GM10248 (cell line): ENCODE measurements at regions of chr3 and their contacts with region 1.

Region 1: DNA sequence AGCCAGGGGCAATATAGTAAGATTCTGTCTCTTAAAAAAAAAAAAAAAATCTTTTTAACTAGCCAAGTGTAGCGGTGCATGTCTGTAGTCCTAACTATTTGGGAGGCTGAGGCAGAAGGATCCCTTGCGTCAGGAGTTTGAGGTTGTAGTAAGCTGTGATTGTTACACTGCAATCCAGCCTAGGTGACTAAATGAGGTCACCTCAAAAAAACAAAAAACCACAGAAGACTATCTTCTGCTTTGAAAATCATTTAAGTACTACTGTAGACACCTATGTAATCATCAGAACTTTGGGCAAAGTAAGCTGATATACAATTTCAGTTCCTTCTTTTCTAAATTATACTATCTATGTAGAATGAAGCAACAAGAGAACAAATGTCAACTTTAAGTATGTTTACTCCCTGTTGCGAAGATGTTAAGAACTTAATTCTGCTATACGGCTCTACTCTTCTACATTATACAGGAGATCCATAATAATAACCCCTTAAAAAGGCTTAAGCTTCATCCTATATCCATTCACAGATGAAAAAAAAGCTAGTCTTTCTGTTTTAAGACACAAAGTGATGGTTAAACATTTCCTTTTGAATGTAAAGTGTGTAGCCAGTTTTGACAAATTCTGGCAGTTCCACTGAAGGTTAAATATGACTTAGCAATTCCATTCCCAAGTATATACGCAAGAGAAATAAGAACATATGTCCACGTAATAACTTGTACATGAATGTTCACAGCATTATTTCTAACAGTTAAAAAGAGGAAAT is 15.2 kb downstream of the DAZL start:
- DNase-seq: peak; percentile 41
- CTCF ChIP-seq: no peak

Region 2: GRCh38 chr3:16570113-16570512 is 19.9 kb before region 1 on chr3:
- CTCF ChIA-PET with region 1: no interaction called
- POLR2A ChIA-PET with region 1: interaction called, 11 read pairs
- DNase-seq: no peak
- CTCF ChIP-seq: no peak